Motor neuron (in vitro differentiated cells): ENCODE measurements at regions of chr9 and their contacts with region 1.

Region 1: DNA sequence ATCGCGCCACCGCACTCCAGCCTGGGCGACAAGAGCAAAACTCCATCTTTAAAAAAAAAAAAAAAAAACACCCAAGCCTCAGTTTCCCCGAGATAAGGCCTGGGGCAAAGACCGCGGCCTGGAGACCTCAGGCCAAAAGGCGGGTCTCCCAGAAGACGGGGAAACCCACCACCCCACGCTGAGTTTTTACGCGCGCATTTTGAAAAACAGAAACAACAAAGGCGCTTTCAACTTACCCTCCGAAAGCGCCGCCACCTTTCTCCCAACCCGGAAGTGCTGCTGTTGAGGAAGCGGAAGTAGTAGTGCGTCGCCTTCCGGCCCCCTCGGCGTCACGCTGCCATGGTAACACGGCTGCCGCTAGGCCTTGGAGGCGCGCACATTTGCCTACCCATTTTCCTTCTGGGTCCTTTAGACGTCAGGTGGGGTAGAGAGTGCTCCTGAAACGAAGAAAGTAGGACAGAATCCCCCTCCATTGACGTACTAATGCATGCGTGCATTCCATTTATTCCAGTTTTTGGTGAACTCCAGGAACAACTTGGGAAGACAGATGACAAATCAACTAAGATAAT is at the start of gene TTF1:
- ATAC-seq: peak; percentile 80 to 91 (median 86)
- H3K4me3 ChIP-seq: peak within 1 kb of the TSS; percentile 69 to 97 (median 83)
- H3K27ac ChIP-seq: peak within 1 kb of the TSS in 1 of 2 donors; percentile 53
- H3K4me1 ChIP-seq: peaks cover 7 to 19% of the 10 kb centered on the region in 2 donors
- total RNA-seq, gene TTF1: 9.6 to 27.4 (median 15.0) TPM

Region 2: DNA sequence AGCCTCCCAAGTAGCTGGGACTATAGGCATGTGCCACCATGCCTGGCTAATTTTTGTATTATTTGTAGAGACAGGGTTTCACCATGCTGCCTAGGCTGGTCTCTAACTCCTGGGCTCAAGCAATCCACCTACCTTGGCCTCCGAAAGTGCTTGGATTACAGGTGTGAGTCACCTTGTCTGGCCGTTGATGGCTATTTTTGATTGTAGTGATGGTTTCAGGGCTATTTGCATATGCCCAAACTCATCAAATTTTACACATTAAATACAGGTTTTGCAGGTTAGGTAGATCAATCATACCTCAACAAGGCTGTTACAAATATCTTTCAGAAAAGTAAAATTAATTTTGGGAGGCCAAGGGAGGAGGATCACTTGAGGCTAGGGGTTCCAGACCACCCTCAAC is 162.2 kb after region 1 on chr9:
- in situ Hi-C with region 1: loop called in 2 of 9 experiments (anchors 5 to 10 kb)
- ATAC-seq: no peak
- H3K4me3 ChIP-seq: no peak overlapping the region
- H3K27ac ChIP-seq: no peak overlapping the region
- H3K4me1 ChIP-seq: peaks cover 15 to 16% of the 10 kb centered on the region in 2 donors

Region 3: GRCh38 chr9:132575005-132575609 is 168.5 kb after region 1 on chr9:
- in situ Hi-C with region 1: loop called in 1 of 9 experiments (anchors 10 kb)
- ATAC-seq: peak; percentile 92 to 99 (median 96)
- H3K4me3 ChIP-seq: no peak overlapping the region
- H3K27ac ChIP-seq: no peak overlapping the region
- H3K4me1 ChIP-seq: peaks cover 9 to 10% of the 10 kb centered on the region in 2 donors

Region 4: GRCh38 chr9:132800038-132800648 is 393.5 kb after region 1 on chr9:
- in situ Hi-C with region 1: loop called in 1 of 9 experiments (anchors 25 kb)
- ATAC-seq: peak; percentile 53 to 81 (median 73)
- H3K4me3 ChIP-seq: peak overlapping the region in 1 of 5 donors; percentile 6
- H3K27ac ChIP-seq: no peak overlapping the region
- H3K4me1 ChIP-seq: peaks cover 7 to 9% of the 10 kb centered on the region in 2 donors